ENCODE measurements at regions of chr11 and their contacts with region 1.

Region 1: DNA sequence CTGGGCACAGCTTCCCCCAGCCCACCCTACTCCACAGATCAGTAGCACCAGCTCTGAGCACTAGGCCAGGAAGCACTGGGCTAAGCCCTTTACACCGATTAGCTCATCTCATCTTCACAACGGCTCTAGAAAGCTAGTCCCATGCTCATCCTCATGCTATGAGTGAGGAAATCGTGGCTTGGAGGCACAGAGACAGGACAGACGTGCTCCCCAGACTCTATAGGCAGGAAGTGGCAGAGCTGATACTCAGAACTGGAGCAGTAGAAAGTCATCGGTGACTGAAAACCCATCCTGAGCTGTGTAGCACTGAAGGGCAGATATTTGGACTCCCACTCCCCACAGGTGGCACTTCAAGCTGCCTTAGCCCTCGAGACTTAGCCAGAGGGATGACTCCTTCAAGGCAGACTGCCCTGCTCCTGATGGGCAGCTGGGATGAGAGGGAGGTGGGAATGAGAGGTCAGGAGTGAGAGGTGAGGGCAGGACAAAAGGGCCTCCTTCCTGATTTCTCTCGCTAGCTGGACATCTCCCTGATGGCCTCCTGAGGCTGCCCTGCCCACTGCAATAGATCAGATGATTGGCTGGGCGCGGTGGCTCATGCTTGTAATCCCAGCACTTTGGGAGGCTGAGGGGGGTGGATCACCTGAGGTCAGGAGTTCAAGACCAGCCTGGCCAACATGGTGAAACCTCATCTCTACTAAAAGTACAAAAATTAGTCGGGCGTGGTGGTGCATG is 9.7 kb downstream of the CD5 start:
- DNase-seq: peak; percentile 73
- H3K4me3 Mint-ChIP-seq: peak overlapping the region; percentile 80
- H3K27ac Mint-ChIP-seq: peak overlapping the region; percentile 91
- H3K4me1 Mint-ChIP-seq: peaks cover 94% of the 10 kb centered on the region
- H3K27me3 Mint-ChIP-seq: no peaks in the 10 kb centered on the region

Region 2: DNA sequence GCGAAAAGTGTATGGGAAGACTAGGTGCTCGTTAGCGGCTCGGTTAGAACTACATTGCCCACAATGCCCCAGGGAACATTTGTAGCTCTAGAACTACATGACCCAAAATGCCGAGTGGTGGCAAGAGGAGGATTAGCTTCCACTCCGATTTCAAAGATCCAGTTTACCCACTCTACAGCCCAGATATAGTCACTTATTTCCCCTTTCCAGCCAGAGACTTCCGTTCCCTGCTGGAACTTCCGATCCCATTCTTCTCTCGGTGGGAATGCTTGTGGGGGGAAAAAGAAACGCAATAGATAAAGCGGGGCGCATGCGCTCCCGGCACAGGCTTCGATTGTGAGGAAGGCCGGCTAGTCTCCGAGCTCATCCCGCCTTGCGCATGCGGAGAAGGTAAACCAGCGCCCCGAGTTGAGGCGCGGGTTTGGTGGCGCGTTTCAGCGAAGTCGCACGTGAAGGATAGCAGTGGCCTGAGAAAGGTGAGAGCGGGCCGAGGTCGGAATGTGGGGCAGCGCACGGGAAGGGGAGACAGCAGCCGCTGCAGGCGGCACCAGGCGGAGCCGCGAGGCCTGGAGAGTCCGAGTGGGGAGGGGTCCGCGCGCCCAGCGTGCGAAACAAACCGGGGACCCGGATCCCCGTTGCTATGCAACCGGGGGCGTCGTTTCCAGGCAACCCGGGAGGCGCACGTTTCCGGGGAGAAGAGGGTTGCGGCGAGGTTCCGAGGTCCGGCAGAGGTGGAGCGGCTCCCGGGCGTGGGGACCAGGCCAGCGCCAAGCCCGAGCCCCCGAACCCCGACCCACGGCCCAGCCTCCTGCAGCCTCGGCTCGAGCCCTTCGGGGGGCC is 197.9 kb before region 1 on chr11 and contains the start of gene TMEM109:
- intact Hi-C with region 1: loop called (anchors 5 kb)
- DNase-seq: peak; percentile 85
- H3K4me3 Mint-ChIP-seq: peak within 1 kb of the TSS; percentile 99
- H3K27ac Mint-ChIP-seq: peak within 1 kb of the TSS; percentile 99
- H3K4me1 Mint-ChIP-seq: peaks cover 56% of the 10 kb centered on the region
- H3K27me3 Mint-ChIP-seq: peaks cover 4% of the 10 kb centered on the region
- total RNA-seq, gene TMEM109: 112 and 120 TPM in 2 replicates

Region 3: DNA sequence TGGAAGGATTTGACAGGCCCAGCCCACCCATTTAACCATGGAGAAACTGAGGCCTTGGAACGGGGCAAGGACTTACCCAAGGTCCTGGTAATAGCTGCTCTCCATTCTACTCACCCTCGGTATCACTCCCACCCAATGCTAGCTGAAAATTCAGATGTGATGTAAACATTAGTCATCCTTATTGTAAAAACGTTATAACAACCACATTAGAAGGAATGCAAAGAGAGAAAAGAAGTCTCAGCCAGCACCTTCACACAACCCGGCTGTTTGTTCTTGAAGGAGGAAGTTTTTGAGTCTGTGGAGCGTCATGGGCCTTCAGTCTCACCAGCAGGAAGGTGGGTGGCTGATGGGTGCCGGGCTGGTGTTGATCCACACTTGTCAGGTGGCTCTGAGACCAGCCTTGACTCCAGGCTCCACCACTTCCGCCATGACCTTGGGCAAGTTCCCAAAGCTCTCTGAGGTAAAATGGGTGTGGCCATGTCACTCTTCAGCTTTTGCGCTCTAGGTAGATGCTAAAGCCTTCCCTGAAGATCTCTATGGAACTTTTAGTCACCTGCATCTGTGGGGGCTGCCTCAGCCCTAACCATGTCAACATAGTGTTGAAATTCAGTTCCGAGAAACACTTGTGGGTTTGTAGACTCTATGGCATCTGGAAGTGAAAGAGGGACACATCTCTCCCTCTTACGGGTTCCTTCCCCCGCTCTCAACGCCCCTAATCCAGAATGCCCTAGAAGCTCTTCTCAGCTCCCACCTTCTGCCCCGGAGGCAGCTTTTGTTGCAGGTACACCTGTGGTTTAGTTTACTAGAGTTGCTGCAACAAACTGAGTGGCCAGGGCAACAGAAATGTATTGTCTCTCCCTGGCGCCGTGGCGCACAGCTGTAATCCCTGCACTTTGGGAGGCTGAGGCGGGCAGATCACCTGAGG is 125.7 kb before region 1 on chr11:
- intact Hi-C with region 1: loop called (anchors 2 kb)
- DNase-seq: peak; percentile 82
- H3K4me3 Mint-ChIP-seq: peak overlapping the region; percentile 83
- H3K27ac Mint-ChIP-seq: peak overlapping the region; percentile 94
- H3K4me1 Mint-ChIP-seq: peaks cover 86% of the 10 kb centered on the region
- H3K27me3 Mint-ChIP-seq: no peaks in the 10 kb centered on the region

Region 4: DNA sequence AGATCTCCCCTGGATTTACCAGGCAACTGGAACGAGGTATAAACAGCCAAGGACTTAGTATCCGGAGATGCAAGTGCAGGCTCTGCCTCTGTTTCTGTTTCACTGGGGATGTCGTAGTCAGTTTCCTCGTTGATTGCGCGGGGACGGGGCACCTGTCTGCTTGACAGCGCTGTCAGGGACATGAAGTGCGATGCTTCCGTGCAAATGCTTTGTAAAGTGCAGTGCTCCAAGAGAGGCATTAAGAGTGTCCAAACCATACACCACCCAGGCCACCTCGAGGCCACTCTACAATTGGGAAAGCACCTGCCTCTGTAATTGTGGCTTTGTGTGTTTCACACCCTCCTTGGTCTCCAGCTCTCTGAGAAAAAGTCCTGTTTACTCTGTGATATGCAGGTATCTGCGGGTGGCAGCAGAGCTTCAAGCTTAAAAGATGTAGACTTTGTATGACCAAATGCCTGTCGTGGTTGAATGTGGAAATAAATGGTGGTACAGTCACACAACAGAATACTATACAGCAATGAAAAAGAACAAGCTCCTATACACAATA is 28.3 kb before region 1 on chr11:
- intact Hi-C with region 1: loop called (anchors 2 kb)
- DNase-seq: peak; percentile 75
- H3K4me3 Mint-ChIP-seq: peak overlapping the region; percentile 83
- H3K27ac Mint-ChIP-seq: peak overlapping the region; percentile 96
- H3K4me1 Mint-ChIP-seq: peaks cover 61% of the 10 kb centered on the region
- H3K27me3 Mint-ChIP-seq: no peaks in the 10 kb centered on the region

Region 5: DNA sequence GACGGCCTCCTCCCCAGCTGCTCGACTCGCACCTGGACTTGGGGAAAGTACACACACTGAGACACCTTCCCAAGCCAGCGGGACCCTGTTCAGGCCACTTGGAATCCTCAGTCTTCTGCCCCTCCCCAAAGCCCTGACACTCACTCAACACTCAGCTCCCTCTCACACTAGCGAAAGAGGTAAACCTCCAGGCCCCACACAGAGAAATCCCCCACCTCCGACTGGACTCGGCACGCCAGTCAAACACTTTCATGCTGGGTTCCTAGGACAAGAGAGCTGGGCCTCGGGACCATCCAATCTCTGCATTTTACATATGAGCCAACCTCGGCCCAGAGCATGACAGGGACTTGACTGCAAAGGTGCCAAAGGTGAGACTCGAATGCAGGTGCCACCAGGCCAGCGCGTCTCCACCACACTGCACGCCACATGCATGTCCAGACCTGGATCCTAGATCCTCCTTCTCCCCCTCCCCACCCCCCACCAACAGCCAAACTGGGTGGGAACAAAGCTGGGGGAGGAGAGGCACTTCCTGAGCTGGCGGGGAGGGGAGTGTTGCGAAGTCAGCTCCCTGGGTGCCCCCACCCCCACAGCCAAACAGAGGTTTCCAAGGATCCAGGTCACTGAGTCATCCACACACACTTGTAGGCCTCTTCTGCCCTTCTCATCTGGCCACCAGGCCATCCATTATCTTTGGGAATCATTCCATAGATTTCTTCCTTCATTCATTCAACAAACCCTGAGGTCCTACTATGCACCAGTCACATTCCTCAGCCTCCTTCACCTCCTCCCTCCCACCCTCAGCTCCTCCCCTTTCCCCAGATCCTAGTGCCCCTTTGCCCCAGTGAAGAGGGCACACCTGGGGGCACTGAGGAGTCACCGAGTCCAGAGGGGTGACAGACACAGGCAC is 20.3 kb before region 1 on chr11:
- intact Hi-C with region 1: loop called (anchors 1 kb)
- DNase-seq: no peak
- H3K4me3 Mint-ChIP-seq: peak overlapping the region; percentile 94
- H3K27ac Mint-ChIP-seq: peak overlapping the region; percentile 99
- H3K4me1 Mint-ChIP-seq: peaks cover 67% of the 10 kb centered on the region
- H3K27me3 Mint-ChIP-seq: no peaks in the 10 kb centered on the region

Region 6: DNA sequence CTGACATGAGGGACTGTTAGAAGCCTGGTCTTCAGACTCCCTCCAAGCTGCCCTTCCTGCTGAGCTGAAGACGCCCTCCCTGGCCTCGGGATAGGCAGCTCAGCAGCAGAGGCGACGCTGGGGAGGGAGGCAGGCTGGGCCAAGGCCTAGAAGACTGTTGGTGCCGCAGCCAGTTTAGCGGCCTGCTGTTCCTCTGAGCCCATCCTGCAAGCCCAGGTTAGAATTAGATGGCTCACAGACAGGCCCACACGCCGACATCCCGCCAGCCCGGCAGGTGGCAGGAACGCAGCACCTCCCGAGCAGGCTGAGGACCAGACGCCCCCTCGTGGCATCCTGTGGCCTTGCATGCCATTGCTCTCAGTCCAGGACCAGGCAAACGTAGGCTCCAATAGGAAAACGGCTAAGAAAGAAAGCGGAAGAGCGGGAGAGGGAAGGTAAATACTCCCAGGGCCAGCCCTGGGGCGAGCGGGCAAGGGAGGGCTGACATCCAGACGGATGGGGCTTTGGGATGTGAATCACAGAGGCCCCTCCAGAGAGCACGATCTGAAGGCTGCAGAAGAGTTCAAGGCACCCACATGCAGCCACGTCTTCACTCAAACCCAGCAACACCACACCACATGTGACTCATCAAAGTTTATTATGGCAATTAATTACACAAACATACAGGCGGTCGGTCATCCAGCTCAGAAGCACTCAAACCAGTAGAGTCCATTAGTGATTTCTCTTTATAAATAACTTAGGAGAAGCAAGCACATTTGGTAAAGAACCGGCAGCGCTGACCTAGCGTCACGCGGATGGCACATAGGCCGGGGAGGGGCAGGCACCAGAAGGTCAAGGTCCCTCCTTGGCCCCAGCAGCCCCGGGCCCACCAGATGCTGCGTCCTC is 17.9 kb after region 1 on chr11:
- intact Hi-C with region 1: loop called (anchors 2 kb)
- DNase-seq: peak; percentile 84
- H3K4me3 Mint-ChIP-seq: peak overlapping the region; percentile 5
- H3K27ac Mint-ChIP-seq: peak overlapping the region; percentile 34
- H3K4me1 Mint-ChIP-seq: peaks cover 23% of the 10 kb centered on the region
- H3K27me3 Mint-ChIP-seq: no peaks in the 10 kb centered on the region

Region 7: DNA sequence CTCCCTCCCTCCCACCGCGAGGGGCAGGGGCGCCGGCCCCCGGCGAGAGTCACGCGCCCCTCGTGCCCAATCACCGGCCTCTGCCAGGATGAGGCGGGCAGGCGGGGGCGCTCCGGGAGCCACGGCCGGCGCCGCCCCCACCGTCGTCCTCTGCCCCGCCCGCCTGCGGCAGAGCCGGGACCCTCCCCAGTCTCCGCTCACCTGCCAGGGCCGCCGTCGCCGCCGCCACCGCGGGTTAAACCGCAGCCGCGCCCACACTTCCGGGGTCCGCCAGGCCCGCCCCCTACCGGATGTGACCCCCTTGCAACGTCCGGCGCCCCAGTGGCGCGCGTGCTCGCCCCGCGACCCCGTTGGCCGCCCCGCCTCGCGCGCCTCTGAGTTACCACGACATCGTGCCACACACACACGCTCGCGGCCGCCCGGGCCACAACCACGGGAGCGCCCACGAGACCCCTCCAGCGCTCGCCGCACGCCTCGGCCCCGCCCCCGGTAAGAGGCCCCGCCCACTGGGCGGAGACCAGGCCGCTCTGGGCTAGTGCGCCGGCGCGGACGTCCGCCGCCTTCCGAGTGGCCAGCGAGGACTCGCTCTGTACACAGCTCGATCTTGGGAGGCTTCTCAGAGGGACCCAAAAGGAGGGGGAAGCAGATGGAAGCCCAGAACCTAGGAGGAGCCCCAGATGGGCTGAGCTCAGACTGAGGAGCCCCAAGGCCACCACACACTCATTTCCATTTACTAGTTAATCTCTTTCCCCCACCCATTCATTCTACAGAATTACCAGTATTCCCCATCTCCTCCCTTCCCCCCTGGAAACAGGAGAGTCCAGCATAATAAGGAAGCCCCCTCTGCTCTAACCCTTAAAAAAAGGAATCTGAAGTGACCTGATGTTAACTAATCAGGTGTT is 49.5 kb after region 1 on chr11 and contains the start of gene VPS37C:
- intact Hi-C with region 1: loop called (anchors 2 kb)
- DNase-seq: peak; percentile 91
- H3K4me3 Mint-ChIP-seq: peak within 1 kb of the TSS; percentile 84
- H3K27ac Mint-ChIP-seq: peak within 1 kb of the TSS; percentile 85
- H3K4me1 Mint-ChIP-seq: peaks cover 52% of the 10 kb centered on the region
- H3K27me3 Mint-ChIP-seq: no peaks in the 10 kb centered on the region
- total RNA-seq, gene VPS37C: 10.6 and 12.5 TPM in 2 replicates

Measured in activated T-helper 2 cell treated with anti-CD3 and anti-CD28 coated beads, Interferon-gamma antibody, Interleukin-2, Interleukin-4, amounts not matched to agents 10 μg/mL and 5 μg/mL and 100 μg/mL, durations not matched to agents 14 hours and 24 hours and 36 hours (primary cell).